Heart right ventricle (tissue), 16 donors: ENCODE measurements at regions of chr18 and their contacts with region 1.

Region 1: DNA sequence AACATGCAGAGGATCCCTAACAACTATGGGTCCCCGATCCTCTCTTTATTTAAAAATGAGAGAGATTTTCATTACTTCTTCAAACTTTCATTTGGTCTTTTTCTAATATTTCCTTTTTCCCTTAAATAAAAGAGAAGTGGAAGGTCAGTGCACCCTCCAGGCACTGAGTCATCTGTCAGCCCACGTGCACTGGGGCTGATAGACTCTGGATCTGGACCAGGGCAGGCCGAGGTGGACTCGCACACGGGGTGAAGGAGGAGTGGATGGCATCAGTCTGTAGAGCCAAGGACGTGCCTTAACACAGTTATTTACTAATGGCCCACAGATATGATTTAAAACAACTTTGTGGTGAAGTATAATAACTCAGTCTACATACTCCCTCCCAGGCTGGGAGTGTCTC is 214.4 kb upstream of the TMEM200C start:
- DNase-seq: no peak
- ATAC-seq: peak in 3 of 8 donors; percentile 55 to 74 (median 59)
- H3K4me3 ChIP-seq: no peak overlapping the region
- H3K27ac ChIP-seq: no peak overlapping the region
- H3K4me1 ChIP-seq: peaks cover 0 to 4% (median 0%) of the 10 kb centered on the region in 9 donors
- H3K27me3 ChIP-seq: no peaks in the 10 kb centered on the region
- CTCF ChIP-seq: no peak

Region 2: GRCh38 chr18:6069103-6069502 is 40.6 kb before region 1 on chr18:
- intact Hi-C with region 1: loop called in 1 of 10 experiments (anchors 10 kb)
- DNase-seq: no peak
- ATAC-seq: no peak
- H3K4me3 ChIP-seq: no peak overlapping the region
- H3K27ac ChIP-seq: no peak overlapping the region
- H3K4me1 ChIP-seq: no peaks in the 10 kb centered on the region
- H3K27me3 ChIP-seq: no peaks in the 10 kb centered on the region
- CTCF ChIP-seq: no peak

Region 3: DNA sequence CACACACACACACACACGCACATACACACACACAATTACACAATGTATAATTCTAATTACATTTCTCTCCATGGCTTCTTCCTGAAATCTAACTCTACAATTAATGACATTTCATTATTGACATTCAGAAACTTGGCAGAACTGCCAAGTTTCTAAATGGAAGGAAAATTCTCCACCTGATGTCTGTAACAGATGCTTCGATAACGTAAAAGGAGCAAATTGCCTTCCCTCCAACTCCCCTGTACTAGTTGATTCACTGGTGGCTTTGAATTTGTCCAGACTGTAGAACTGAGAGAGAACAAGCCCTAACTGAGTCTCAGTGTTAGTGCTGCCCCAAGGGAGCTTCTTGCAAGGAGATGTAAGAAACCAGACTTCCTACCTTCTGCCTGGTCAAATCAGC is 40.7 kb after region 1 on chr18:
- intact Hi-C with region 1: no loop called
- DNase-seq: no peak
- ATAC-seq: peak in 6 of 8 donors; percentile 61 to 90 (median 75)
- H3K4me3 ChIP-seq: no peak overlapping the region
- H3K27ac ChIP-seq: no peak overlapping the region
- H3K4me1 ChIP-seq: peaks cover 0 to 6% (median 0%) of the 10 kb centered on the region in 9 donors
- H3K27me3 ChIP-seq: no peaks in the 10 kb centered on the region
- CTCF ChIP-seq: no peak

Region 4: GRCh38 chr18:6221602-6222014 is 111.9 kb after region 1 on chr18:
- intact Hi-C with region 1: no loop called
- DNase-seq: no peak
- ATAC-seq: no peak
- H3K4me3 ChIP-seq: no peak overlapping the region
- H3K27ac ChIP-seq: no peak overlapping the region
- H3K4me1 ChIP-seq: no peaks in the 10 kb centered on the region
- H3K27me3 ChIP-seq: no peaks in the 10 kb centered on the region
- CTCF ChIP-seq: no peak

Region 5: GRCh38 chr18:6509832-6510231 is 400.1 kb after region 1 on chr18:
- intact Hi-C with region 1: no loop called
- DNase-seq: no peak
- ATAC-seq: peak in 1 of 8 donors; percentile 20
- H3K4me3 ChIP-seq: no peak overlapping the region
- H3K27ac ChIP-seq: no peak overlapping the region
- H3K4me1 ChIP-seq: peaks cover 0 to 7% (median 0%) of the 10 kb centered on the region in 9 donors
- H3K27me3 ChIP-seq: peaks cover 0 to 31% (median 4%) of the 10 kb centered on the region in 7 donors
- CTCF ChIP-seq: no peak